WTC11 (cell line): ENCODE measurements at regions of chr19 and their contacts with region 1.

Region 1: DNA sequence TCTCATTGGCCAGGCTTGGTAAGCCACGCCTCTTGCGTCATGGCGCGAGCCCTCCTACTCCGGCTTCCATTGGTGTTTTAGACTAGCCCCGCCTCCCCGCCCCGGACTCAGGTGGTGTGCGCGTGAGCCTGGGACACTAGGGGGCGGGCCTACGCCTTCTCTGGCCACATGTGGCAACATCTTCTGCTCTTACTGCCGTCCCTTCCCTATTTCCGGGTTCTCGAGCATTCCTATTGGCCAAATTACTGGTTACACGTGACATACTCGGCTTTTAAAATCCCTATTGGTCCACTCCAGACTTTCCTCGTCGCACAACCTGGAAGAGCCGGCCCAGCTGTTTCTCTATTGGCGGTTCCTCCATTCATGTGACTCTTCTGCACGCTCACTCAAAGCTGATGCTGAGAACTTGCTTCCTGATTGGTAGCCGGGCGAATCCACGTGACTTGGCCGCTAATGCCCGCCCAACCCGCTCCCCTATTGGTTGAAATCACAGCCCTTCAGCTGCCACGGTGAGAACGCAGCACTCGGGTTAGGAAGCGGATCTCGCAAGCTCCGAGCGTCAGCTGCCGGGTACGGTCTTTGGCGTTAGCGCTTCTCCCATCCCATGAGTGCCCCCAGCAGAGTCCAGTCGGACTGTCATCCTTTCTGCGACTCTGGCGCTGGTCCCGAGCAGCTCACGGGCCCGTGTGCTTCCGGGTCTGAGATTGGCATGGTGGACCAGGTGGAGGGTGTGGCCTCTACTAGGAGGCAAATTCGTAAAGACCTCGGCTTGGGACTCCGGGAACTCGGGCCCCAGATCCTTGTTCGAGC is at the start of gene BLOC1S3:
- DNase-seq: peak; percentile 100
- ATAC-seq: peak; percentile 92
- H3K4me3 Mint-ChIP-seq: peak within 1 kb of the TSS; percentile 90
- H3K27ac Mint-ChIP-seq: peak within 1 kb of the TSS; percentile 94
- H3K4me1 Mint-ChIP-seq: peaks cover 8% of the 10 kb centered on the region; the same call in 1 of the 2 replicates
- H3K27me3 Mint-ChIP-seq: peaks cover 8% of the 10 kb centered on the region; the same call in 1 of the 2 replicates
- CTCF ChIP-seq: peak; percentile 38
- total RNA-seq, gene BLOC1S3: 9.0 to 10.8 TPM (median 10.0 TPM) in 3 replicates

Region 2: GRCh38 chr19:45092747-45093678 is 85.5 kb before region 1 on chr19 and contains the start of gene PPP1R37:
- CTCF ChIA-PET with region 1: interaction called, 13 read pairs
- POLR2A ChIA-PET with region 1: interaction called, 14 read pairs
- DNase-seq: peak; percentile 93
- ATAC-seq: peak; percentile 52
- H3K4me3 Mint-ChIP-seq: peak within 1 kb of the TSS; percentile 84
- H3K27ac Mint-ChIP-seq: peak within 1 kb of the TSS; percentile 100
- H3K4me1 Mint-ChIP-seq: peaks cover 57% of the 10 kb centered on the region
- H3K27me3 Mint-ChIP-seq: no peaks in the 10 kb centered on the region
- CTCF ChIP-seq: no peak
- total RNA-seq, gene PPP1R37: 34.5 to 35.9 TPM (median 35.4 TPM) in 3 replicates

Region 3: DNA sequence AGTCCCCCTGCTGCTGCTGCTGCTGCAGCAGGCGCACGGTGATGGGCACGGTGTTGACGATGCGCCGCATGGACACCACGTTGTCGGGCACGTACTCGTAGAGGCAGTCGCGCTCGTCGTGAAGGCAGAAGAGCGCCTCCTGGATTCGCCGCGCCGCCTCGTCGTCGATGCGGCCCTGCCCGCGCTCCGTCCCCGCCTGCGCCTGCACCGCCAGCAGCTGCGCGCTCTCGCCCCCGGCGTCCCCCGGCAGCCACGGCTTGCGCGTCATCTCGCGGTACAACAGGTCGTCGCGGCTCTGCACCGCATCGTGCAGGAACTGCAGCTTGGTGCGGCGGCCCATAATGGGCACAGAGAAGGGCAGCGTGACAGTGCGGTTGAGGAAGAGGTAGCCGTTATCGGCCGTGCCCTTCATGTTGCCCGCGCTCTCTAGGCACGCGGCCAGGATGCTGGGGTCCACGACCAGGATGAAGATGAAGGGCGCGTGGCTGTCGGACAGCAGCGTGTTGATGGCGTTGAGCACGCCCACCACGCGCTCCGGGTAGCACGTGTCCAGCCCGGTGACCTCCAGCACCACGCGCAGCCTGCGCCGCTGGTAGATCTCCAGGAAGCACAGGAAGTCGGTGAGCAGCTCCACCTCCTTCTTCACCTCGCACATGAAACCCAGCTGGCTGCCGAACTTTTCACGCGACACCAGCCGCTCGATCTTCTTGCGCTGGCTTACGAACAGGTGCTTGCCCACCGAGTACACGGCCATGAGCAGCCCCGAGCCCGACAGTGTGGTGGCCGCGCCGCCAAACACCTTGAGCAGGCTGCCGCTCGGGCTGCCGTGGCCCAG is 25.7 kb before region 1 on chr19:
- CTCF ChIA-PET with region 1: interaction called, 21 read pairs
- POLR2A ChIA-PET with region 1: interaction called, 3 read pairs
- DNase-seq: peak; percentile 75
- ATAC-seq: peak; percentile 23
- H3K4me3 Mint-ChIP-seq: peak overlapping the region; percentile 54
- H3K27ac Mint-ChIP-seq: no peak overlapping the region
- H3K4me1 Mint-ChIP-seq: peaks cover 15% of the 10 kb centered on the region
- H3K27me3 Mint-ChIP-seq: peaks cover 58% of the 10 kb centered on the region
- CTCF ChIP-seq: no peak

Region 4: GRCh38 chr19:45250214-45250831 is 71.9 kb after region 1 on chr19:
- CTCF ChIA-PET with region 1: interaction called, 13 read pairs
- POLR2A ChIA-PET with region 1: no interaction called
- DNase-seq: no peak
- ATAC-seq: no peak
- H3K4me3 Mint-ChIP-seq: peak overlapping the region; percentile 89
- H3K27ac Mint-ChIP-seq: no peak overlapping the region
- H3K4me1 Mint-ChIP-seq: peaks cover 22% of the 10 kb centered on the region
- H3K27me3 Mint-ChIP-seq: peaks cover 25% of the 10 kb centered on the region
- CTCF ChIP-seq: no peak

Region 5: GRCh38 chr19:45294291-45295029 is 116.0 kb after region 1 on chr19:
- CTCF ChIA-PET with region 1: no interaction called
- POLR2A ChIA-PET with region 1: no interaction called
- DNase-seq: no peak
- ATAC-seq: no peak
- H3K4me3 Mint-ChIP-seq: no peak overlapping the region
- H3K27ac Mint-ChIP-seq: no peak overlapping the region
- H3K4me1 Mint-ChIP-seq: no peaks in the 10 kb centered on the region
- H3K27me3 Mint-ChIP-seq: peaks cover 7% of the 10 kb centered on the region; the same call in 1 of the 2 replicates
- CTCF ChIP-seq: no peak

Region 6: GRCh38 chr19:45340232-45340898 is 161.9 kb after region 1 on chr19 and contains the start of gene KLC3:
- CTCF ChIA-PET with region 1: interaction called, 11 read pairs
- POLR2A ChIA-PET with region 1: no interaction called
- DNase-seq: peak; percentile 66
- ATAC-seq: peak; percentile 55
- H3K4me3 Mint-ChIP-seq: peak within 1 kb of the TSS; percentile 63
- H3K27ac Mint-ChIP-seq: no peak within 1 kb of the TSS
- H3K4me1 Mint-ChIP-seq: peaks cover 2% of the 10 kb centered on the region; the same call in 1 of the 2 replicates
- H3K27me3 Mint-ChIP-seq: peaks cover 15% of the 10 kb centered on the region
- CTCF ChIP-seq: no peak
- total RNA-seq, gene KLC3: 5.2 to 6.5 TPM (median 5.3 TPM) in 3 replicates

Region 7: DNA sequence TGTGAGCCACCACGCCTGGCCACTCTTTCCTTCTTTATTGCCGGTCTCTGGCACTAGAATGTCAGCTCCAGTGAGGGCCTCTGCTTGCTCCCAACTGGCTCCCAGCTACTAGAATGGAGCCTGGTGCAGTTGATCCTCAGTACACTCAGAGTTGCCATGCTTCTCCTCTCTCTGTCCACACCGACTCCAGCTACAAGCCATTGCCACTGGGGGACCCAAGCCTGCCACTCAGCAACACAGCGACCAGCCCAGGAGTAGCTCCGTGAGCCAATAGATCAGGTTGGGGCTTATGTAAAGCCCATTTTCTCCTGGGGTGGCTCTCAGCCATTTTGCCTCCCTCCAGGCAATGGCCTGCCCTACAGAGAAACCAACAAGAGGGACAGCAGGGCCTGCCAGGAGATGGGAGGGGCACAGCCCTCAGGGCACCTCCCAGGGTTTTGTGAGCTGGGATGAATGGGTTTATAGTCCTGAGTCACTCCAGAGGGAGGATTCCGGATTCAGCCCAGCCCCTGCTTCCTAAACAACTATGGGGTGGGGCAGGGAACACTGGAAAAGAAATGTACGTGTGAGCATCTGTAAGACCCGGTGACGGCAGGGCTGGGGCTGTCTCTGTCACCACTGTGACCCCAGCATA is 369.6 kb after region 1 on chr19:
- CTCF ChIA-PET with region 1: no interaction called
- POLR2A ChIA-PET with region 1: no interaction called
- DNase-seq: no peak
- ATAC-seq: peak; percentile 41; the same call in 1 of the 2 replicates
- H3K4me3 Mint-ChIP-seq: no peak overlapping the region
- H3K27ac Mint-ChIP-seq: peak overlapping the region; percentile 45; the same call in 1 of the 2 replicates
- H3K4me1 Mint-ChIP-seq: peaks cover 20% of the 10 kb centered on the region
- H3K27me3 Mint-ChIP-seq: no peaks in the 10 kb centered on the region
- CTCF ChIP-seq: no peak